CD8-positive, alpha-beta T cell (primary cell): ENCODE measurements at regions of chr6 and their contacts with region 1.

Region 1: GRCh38 chr6:6686748-6687601 is 98.5 kb downstream of the LY86 start:
- DNase-seq: peak in 3 of 9 experiments; percentile 24 to 55 (median 33)
- ATAC-seq: no peak
- H3K4me3 ChIP-seq: no peak overlapping the region
- H3K4me3 Mint-ChIP-seq: no peak overlapping the region
- H3K27ac ChIP-seq: no peak overlapping the region
- H3K27ac Mint-ChIP-seq: no peak overlapping the region
- H3K4me1 ChIP-seq: no peaks in the 10 kb centered on the region
- H3K4me1 Mint-ChIP-seq: peaks cover 13% of the 10 kb centered on the region
- H3K27me3 ChIP-seq: no peaks in the 10 kb centered on the region
- H3K27me3 Mint-ChIP-seq: no peaks in the 10 kb centered on the region
- CTCF ChIP-seq: no peak

Region 2: DNA sequence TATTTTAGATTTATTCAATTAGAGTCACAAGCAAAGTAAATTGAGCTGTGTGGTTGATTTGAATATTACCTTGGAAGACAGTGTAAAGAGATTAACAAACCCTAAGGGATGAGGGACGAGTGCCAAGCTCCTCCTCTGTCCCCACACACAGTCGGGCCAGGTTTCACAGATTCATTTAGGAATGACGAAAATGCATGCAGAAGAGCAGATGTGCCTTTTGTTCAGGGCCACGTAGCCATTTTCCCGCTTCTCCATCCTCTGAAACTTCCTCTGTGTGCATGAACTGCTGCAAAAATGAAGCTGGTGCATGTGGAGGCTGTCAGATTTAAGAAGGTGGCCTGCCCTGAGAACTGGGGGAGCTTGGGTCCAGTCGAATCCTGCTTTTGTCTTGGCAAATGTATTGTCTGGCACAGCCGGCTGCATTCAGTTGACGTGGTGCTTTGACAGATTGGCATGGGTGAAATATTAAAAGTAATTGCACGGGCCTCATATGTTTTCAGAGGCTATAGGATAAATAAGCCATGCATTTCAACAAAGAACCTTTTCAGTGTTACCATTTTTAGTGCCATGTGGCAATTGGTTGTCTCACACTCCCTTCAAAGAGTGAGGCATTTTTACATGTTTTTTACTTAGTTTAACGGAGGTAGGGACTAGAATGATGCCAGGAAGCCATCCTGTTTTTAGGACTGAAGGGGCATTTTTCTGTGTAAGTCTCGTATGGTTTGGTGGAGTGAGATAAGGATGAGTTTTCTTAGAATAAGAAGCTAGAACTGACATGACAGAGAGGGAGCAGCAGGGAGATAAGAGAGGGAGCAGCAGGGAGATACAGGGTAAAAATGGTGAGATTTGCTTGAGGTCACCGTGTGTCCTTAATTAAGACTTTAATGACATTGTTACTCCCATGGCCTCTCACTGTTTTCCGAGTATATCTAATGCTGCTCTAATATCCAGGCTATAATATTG is 1041.4 kb before region 1 on chr6:
- CTCF ChIA-PET with region 1: no interaction called
- POLR2A ChIA-PET with region 1: no interaction called
- intact Hi-C with region 1: no loop called
- DNase-seq: no peak
- ATAC-seq: no peak
- H3K4me3 ChIP-seq: no peak overlapping the region
- H3K4me3 Mint-ChIP-seq: no peak overlapping the region
- H3K27ac ChIP-seq: no peak overlapping the region
- H3K27ac Mint-ChIP-seq: no peak overlapping the region
- H3K4me1 ChIP-seq: no peaks in the 10 kb centered on the region
- H3K4me1 Mint-ChIP-seq: peaks cover 2% of the 10 kb centered on the region
- H3K27me3 ChIP-seq: no peaks in the 10 kb centered on the region
- H3K27me3 Mint-ChIP-seq: no peaks in the 10 kb centered on the region
- CTCF ChIP-seq: no peak

Region 3: GRCh38 chr6:8229915-8230756 is 1543.2 kb after region 1 on chr6:
- CTCF ChIA-PET with region 1: no interaction called
- POLR2A ChIA-PET with region 1: no interaction called
- intact Hi-C with region 1: loop called in 1 of 2 experiments (anchors 10 kb)
- DNase-seq: no peak
- ATAC-seq: no peak
- H3K4me3 ChIP-seq: no peak overlapping the region
- H3K4me3 Mint-ChIP-seq: no peak overlapping the region
- H3K27ac ChIP-seq: no peak overlapping the region
- H3K27ac Mint-ChIP-seq: no peak overlapping the region
- H3K4me1 ChIP-seq: no peaks in the 10 kb centered on the region
- H3K4me1 Mint-ChIP-seq: no peaks in the 10 kb centered on the region
- H3K27me3 ChIP-seq: no peaks in the 10 kb centered on the region
- H3K27me3 Mint-ChIP-seq: peaks cover 12% of the 10 kb centered on the region
- CTCF ChIP-seq: no peak